Naive thymus-derived CD4-positive, alpha-beta T cell (primary cell): ENCODE measurements at regions of chr5 and their contacts with region 1.

Region 1: DNA sequence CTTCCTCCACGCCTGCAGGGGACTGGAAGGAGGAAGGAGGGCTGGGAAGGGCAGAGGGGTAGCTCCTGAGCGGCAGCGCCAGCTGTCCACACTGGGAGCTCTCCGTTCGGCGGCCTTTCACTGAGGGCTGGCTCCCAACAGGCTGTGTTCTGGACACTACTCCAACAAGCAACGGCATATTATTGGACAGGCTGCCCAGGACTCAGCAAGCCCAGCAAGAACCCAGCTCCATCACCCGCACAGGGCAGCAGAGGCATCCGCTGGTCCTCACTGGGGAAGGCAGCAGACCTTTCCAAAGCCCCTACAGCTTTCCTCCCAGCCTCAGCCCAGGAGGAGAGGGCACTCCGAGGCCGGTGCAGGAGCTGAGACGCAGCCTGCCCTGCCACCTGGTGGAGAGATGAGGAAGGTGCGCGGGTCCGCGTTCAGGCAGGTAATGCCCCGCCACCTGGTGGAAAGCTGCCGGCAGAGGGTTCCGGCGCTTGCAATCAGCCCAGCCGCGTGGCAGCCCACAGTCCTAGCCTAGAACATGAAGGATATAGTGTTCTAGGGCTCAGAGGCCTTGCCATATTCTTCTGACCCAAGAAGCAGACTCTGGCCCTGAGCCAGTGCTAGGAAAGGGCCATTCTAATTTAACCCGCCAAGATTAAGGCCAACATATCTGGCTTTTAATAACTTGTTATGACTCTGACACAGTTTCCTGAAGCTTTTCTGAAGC is 74.4 kb downstream of the NRG2 start:
- DNase-seq: peak; percentile 65 to 88 (median 83)
- ATAC-seq: peak; percentile 99
- H3K4me3 ChIP-seq: no peak overlapping the region
- H3K4me3 Mint-ChIP-seq: no peak overlapping the region
- H3K27ac ChIP-seq: no peak overlapping the region
- H3K27ac Mint-ChIP-seq: no peak overlapping the region
- H3K4me1 ChIP-seq: no peaks in the 10 kb centered on the region
- H3K4me1 Mint-ChIP-seq: no peaks in the 10 kb centered on the region
- H3K27me3 ChIP-seq: no peaks in the 10 kb centered on the region
- H3K27me3 Mint-ChIP-seq: peaks cover 7 to 33% (median 25%) of the 10 kb centered on the region in 5 donors

Region 2: DNA sequence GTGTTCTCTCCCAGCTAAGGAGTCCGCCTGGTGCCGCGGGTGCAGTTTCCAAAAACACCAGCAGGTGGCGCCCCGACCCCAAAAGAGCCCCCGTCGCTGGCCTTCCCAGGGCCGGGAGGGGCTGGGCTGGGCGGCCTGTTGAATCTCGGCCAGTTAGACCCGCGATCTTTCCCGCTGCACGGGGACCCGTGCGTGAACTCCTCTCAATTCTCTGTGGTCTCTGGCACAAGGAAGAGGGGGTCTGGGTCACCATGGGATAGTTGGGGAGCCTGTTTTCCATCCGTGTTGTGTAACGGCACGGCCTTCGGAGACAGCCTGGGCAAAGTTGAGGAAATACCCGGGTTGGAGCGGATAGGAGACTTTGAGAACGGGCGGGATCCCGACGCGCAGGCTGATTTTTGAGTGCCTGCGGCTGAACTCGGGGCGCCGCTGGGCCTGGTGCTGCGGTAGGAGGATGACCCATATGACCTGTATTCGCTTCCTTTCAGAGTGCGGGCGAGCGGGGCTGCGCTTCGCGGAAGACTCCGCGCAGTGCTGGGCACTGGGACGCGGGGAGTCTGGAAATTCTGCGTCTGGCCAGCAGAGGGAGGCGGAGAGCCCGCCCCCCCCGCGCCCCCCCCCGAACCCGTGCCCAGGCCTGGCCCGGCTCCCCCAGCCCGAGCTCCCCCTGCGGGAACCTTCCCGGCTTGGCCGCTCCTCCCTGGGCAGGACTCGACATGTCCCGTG is 181.0 kb before region 1 on chr5:
- CTCF ChIA-PET with region 1: interaction called, 51 read pairs
- POLR2A ChIA-PET with region 1: no interaction called
- intact Hi-C with region 1: loop called (anchors 1 kb)
- DNase-seq: peak; percentile 48 to 91 (median 82)
- ATAC-seq: peak; percentile 92
- H3K4me3 ChIP-seq: peak overlapping the region; percentile 84
- H3K4me3 Mint-ChIP-seq: peak overlapping the region; percentile 79 to 88 (median 84)
- H3K27ac ChIP-seq: no peak overlapping the region
- H3K27ac Mint-ChIP-seq: peak overlapping the region in 1 of 9 donors; percentile 41
- H3K4me1 ChIP-seq: peaks cover 4% of the 10 kb centered on the region in 2 donors
- H3K4me1 Mint-ChIP-seq: peaks cover 0 to 7% (median 0%) of the 10 kb centered on the region in 7 donors
- H3K27me3 ChIP-seq: peaks cover 0 to 6% of the 10 kb centered on the region in 2 donors
- H3K27me3 Mint-ChIP-seq: peaks cover 17 to 48% (median 27%) of the 10 kb centered on the region in 5 donors

Region 3: GRCh38 chr5:139844472-139845145 is 124.1 kb before region 1 on chr5:
- CTCF ChIA-PET with region 1: interaction called, 3 read pairs
- POLR2A ChIA-PET with region 1: interaction called, 3 read pairs
- intact Hi-C with region 1: loop called in 1 of 2 experiments (anchors 10 kb)
- DNase-seq: peak; percentile 26 to 62 (median 57)
- ATAC-seq: peak; percentile 28
- H3K4me3 ChIP-seq: no peak overlapping the region
- H3K4me3 Mint-ChIP-seq: peak overlapping the region in 2 of 10 donors; percentile 21 to 49
- H3K27ac ChIP-seq: no peak overlapping the region
- H3K27ac Mint-ChIP-seq: no peak overlapping the region
- H3K4me1 ChIP-seq: peaks cover 0 to 5% of the 10 kb centered on the region in 2 donors
- H3K4me1 Mint-ChIP-seq: peaks cover 7 to 17% (median 12%) of the 10 kb centered on the region in 7 donors
- H3K27me3 ChIP-seq: no peaks in the 10 kb centered on the region
- H3K27me3 Mint-ChIP-seq: peaks cover 13 to 59% (median 16%) of the 10 kb centered on the region in 5 donors

Region 4: GRCh38 chr5:139863855-139864558 is 104.7 kb before region 1 on chr5:
- CTCF ChIA-PET with region 1: interaction called, 3 read pairs
- POLR2A ChIA-PET with region 1: no interaction called
- intact Hi-C with region 1: loop called in 1 of 2 experiments (anchors 5 kb)
- DNase-seq: peak; percentile 12 to 57 (median 28)
- ATAC-seq: peak; percentile 68
- H3K4me3 ChIP-seq: no peak overlapping the region
- H3K4me3 Mint-ChIP-seq: no peak overlapping the region
- H3K27ac ChIP-seq: no peak overlapping the region
- H3K27ac Mint-ChIP-seq: no peak overlapping the region
- H3K4me1 ChIP-seq: no peaks in the 10 kb centered on the region
- H3K4me1 Mint-ChIP-seq: peaks cover 0 to 2% (median 0%) of the 10 kb centered on the region in 7 donors
- H3K27me3 ChIP-seq: no peaks in the 10 kb centered on the region
- H3K27me3 Mint-ChIP-seq: peaks cover 0 to 19% (median 10%) of the 10 kb centered on the region in 5 donors

Region 5: DNA sequence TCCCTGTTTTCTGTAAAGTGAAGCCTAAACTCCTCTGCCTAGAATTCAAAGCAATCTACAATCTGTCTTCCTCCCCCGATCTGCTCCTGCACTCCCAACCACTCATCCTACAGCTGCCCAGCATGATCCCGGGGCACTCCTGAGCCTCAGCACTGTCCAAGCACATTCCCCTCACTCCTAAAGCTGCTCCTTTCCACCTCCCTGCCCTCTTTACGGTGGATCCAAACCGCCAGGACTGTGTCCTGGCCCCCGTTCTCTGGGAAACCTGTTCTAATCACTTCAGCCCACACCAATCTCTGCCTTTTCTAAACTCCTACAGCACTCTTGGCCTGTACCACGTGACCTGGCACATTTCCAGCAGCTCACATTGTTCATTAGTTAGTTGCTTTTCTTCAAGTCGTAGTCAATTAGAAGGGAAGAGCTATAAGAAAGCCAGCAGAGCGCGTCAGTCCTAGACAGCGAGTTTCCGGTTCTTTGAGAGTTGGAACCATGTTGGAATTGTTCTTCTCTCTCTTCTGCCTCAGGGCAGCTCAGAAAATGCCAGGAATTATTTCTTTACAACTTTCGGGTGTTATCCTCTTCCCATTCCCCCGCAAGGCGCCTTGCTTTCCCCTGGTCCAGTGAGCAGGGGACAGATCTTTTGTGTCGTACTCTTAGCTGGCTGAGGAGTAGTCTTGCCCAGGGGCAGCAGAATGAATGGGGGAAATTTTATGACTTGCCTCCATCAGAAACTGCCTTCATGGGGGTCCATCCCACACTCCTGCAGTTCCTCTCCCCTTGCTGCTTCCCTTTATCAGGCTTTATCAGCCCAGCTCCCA is 13.7 kb after region 1 on chr5:
- CTCF ChIA-PET with region 1: interaction called, 12 read pairs
- POLR2A ChIA-PET with region 1: no interaction called
- intact Hi-C with region 1: no loop called
- DNase-seq: no peak
- ATAC-seq: no peak
- H3K4me3 ChIP-seq: no peak overlapping the region
- H3K4me3 Mint-ChIP-seq: no peak overlapping the region
- H3K27ac ChIP-seq: no peak overlapping the region
- H3K27ac Mint-ChIP-seq: no peak overlapping the region
- H3K4me1 ChIP-seq: no peaks in the 10 kb centered on the region
- H3K4me1 Mint-ChIP-seq: peaks cover 0 to 7% (median 0%) of the 10 kb centered on the region in 7 donors
- H3K27me3 ChIP-seq: no peaks in the 10 kb centered on the region
- H3K27me3 Mint-ChIP-seq: peaks cover 28 to 51% (median 33%) of the 10 kb centered on the region in 5 donors

Region 6: GRCh38 chr5:140042643-140043500 is 74.2 kb after region 1 on chr5 and contains the start of gene NRG2:
- CTCF ChIA-PET with region 1: interaction called, 3 read pairs
- POLR2A ChIA-PET with region 1: no interaction called
- intact Hi-C with region 1: loop called in 1 of 2 experiments (anchors 2 kb)
- DNase-seq: peak; percentile 11 to 58 (median 38)
- ATAC-seq: peak; percentile 88
- H3K4me3 ChIP-seq: peak within 1 kb of the TSS; percentile 55
- H3K4me3 Mint-ChIP-seq: peak within 1 kb of the TSS; percentile 71 to 85 (median 80)
- H3K27ac ChIP-seq: no peak within 1 kb of the TSS
- H3K27ac Mint-ChIP-seq: no peak within 1 kb of the TSS
- H3K4me1 ChIP-seq: peaks cover 3 to 6% of the 10 kb centered on the region in 2 donors
- H3K4me1 Mint-ChIP-seq: peaks cover 12 to 30% (median 22%) of the 10 kb centered on the region in 7 donors
- H3K27me3 ChIP-seq: peaks cover 0 to 24% of the 10 kb centered on the region in 2 donors
- H3K27me3 Mint-ChIP-seq: peaks cover 66 to 75% (median 69%) of the 10 kb centered on the region in 5 donors
- total RNA-seq, gene NRG2: 0.11 to 0.22 (median 0.13) TPM in 3 of 5 experiments, not detected in the others

Region 7: DNA sequence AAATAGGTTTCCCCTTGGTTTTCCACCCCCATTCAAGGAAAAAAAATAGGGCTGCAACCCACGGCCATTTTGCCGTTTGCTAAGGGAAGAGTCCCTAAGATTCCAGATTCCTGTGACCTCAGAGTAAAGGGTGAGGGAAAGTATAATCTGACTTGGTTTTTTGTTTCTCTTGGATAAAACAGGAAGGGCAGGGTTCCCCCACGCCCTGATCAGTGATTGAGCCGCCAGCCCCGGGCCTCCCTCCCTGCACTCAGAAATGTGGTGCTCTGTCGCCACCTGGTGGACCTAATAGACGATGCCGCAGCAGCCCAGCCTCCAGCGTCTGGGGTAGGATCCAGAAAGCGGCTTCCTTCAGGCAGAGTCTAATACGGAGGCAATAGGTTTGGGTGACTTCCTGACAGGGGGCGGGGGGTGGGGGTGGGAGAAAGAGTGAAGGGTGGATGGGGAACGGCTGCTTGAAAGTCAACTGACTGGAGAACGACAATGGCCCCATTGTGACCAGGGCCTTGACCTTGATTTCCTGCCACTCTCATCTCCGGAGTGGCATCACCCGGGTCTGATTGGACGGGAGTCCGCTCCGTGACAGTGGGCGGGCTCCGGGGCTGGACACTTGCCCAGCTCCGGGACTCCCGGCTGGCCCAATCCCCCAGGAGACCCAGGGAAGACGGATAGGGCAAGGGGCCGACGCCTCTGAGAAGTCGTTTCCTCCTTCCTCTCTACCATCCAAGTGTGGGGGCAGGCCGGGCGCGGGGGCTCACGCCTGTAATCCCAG is 188.5 kb after region 1 on chr5:
- CTCF ChIA-PET with region 1: interaction called, 3 read pairs
- POLR2A ChIA-PET with region 1: no interaction called
- intact Hi-C with region 1: loop called (anchors 1 kb)
- DNase-seq: peak; percentile 72 to 85 (median 82)
- ATAC-seq: peak; percentile 99
- H3K4me3 ChIP-seq: no peak overlapping the region
- H3K4me3 Mint-ChIP-seq: peak overlapping the region in 9 of 10 donors; percentile 7 to 66 (median 62)
- H3K27ac ChIP-seq: no peak overlapping the region
- H3K27ac Mint-ChIP-seq: peak overlapping the region in 4 of 9 donors; percentile 5 to 51 (median 32)
- H3K4me1 ChIP-seq: peaks cover 0 to 5% of the 10 kb centered on the region in 2 donors
- H3K4me1 Mint-ChIP-seq: peaks cover 3 to 12% (median 8%) of the 10 kb centered on the region in 7 donors
- H3K27me3 ChIP-seq: no peaks in the 10 kb centered on the region
- H3K27me3 Mint-ChIP-seq: peaks cover 0 to under 1% (median 0%) of the 10 kb centered on the region in 5 donors